Breast epithelium (tissue), 4 donors: ENCODE measurements at regions of chr1 and their contacts with region 1.

Region 1: GRCh38 chr1:150629115-150629928 is at the start of gene ENSA:
- DNase-seq: peak; percentile 98 to 99
- H3K4me3 ChIP-seq: peak within 1 kb of the TSS; percentile 53 to 70 (median 67)
- H3K27ac ChIP-seq: peak within 1 kb of the TSS; percentile 96 to 97
- H3K4me1 ChIP-seq: peaks cover 0 to 7% of the 10 kb centered on the region in 2 donors
- H3K27me3 ChIP-seq: no peaks in the 10 kb centered on the region
- CTCF ChIP-seq: peak in 1 of 3 donors; percentile 11
- POLR2A ChIP-seq: peak; percentile 95
- total RNA-seq, gene ENSA: 187 to 273 (median 194) TPM

Region 2: DNA sequence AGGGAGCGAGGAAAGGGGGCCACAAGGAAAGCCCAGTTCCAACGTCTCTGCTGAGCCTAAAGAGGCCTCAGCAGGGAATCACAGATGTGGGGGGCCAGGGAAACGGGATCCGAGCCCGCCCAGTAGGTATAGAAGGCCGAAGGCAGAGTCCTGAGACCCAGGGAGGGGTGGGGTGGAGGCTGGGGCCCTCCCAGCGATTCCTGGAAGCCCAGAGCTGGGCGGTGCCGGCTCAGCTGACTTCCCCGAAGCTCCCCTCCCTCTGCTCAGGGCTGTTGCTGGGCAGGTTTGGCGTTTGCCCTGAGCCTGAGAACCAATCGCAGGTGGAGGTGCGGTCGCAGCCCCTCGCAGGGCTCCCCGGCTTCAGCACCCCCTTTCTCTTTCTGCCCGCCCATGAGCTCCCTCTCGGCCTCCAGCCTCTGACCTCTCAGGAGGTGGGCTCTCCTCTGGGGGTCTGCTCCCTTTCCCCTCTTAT is 67.3 kb before region 1 on chr1:
- intact Hi-C with region 1: loop called (anchors 5 kb)
- DNase-seq: peak; percentile 95 to 96
- H3K4me3 ChIP-seq: peak overlapping the region; percentile 47 to 83 (median 57)
- H3K27ac ChIP-seq: peak overlapping the region; percentile 100
- H3K4me1 ChIP-seq: peaks cover 60 to 66% of the 10 kb centered on the region in 2 donors
- H3K27me3 ChIP-seq: no peaks in the 10 kb centered on the region
- CTCF ChIP-seq: no peak
- POLR2A ChIP-seq: peak; percentile 69